ENCODE measurements at regions of chr12 and their contacts with region 1.

Region 1: DNA sequence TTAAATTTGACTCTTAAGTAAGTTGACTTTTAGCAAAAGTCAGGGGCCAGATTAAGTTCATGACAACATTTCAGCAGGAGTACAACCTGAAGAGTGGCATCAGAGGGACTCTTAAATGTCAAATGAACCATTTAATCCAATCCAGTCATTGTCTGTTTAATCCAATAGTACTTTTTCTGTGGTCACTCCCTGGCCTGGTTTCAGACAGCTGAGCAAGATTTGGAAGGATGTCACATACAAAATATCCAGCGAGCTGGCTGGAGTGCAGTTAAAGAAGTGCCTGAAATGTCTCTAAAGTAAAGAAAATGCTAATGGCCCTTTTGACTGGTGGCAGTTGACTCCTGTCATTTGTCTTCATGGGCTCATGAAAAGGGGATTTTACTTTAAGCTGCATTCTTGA is 1082.1 kb downstream of the AACS start:
- DNase-seq: no peak
- H3K4me3 ChIP-seq: no peak overlapping the region
- H3K27ac ChIP-seq: no peak overlapping the region
- H3K4me1 ChIP-seq: no peaks in the 10 kb centered on the region
- H3K27me3 ChIP-seq: no peaks in the 10 kb centered on the region
- CTCF ChIP-seq: no peak
- EP300 ChIP-seq: no peak
- POLR2A ChIP-seq: no peak

Region 2: GRCh38 chr12:125696044-125696443 is 451.3 kb before region 1 on chr12:
- in situ Hi-C with region 1: no loop called
- intact Hi-C with region 1: no loop called
- DNase-seq: no peak
- H3K4me3 ChIP-seq: no peak overlapping the region
- H3K27ac ChIP-seq: no peak overlapping the region
- H3K4me1 ChIP-seq: no peaks in the 10 kb centered on the region
- H3K27me3 ChIP-seq: no peaks in the 10 kb centered on the region
- CTCF ChIP-seq: no peak
- EP300 ChIP-seq: no peak
- POLR2A ChIP-seq: no peak

Region 3: GRCh38 chr12:126114441-126114840 is 32.9 kb before region 1 on chr12:
- in situ Hi-C with region 1: no loop called
- intact Hi-C with region 1: no loop called
- DNase-seq: no peak
- H3K4me3 ChIP-seq: no peak overlapping the region
- H3K27ac ChIP-seq: no peak overlapping the region
- H3K4me1 ChIP-seq: no peaks in the 10 kb centered on the region
- H3K27me3 ChIP-seq: no peaks in the 10 kb centered on the region
- CTCF ChIP-seq: no peak
- EP300 ChIP-seq: no peak
- POLR2A ChIP-seq: no peak

Region 4: DNA sequence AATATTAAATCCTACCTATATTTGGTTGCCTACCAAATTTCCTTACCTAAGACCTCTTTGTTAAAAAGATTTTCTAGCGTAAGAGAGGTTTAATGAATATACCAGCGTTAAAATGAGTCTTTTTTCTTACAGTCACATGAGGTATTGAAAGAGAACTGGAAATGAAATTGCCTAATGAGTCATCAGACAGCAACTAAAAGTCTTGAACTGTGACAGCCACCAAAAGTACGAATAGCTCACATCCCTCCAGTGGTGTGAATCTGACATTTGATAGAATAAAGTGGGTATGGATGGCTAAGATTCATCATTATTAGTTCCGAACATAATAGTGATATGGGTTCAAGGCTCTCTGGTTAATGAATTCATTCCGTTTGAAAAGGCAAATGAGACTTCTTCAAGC is 215.2 kb after region 1 on chr12:
- in situ Hi-C with region 1: no loop called
- intact Hi-C with region 1: no loop called
- DNase-seq: no peak
- H3K4me3 ChIP-seq: no peak overlapping the region
- H3K27ac ChIP-seq: no peak overlapping the region
- H3K4me1 ChIP-seq: no peaks in the 10 kb centered on the region
- H3K27me3 ChIP-seq: no peaks in the 10 kb centered on the region
- CTCF ChIP-seq: no peak
- EP300 ChIP-seq: no peak
- POLR2A ChIP-seq: no peak

Region 5: DNA sequence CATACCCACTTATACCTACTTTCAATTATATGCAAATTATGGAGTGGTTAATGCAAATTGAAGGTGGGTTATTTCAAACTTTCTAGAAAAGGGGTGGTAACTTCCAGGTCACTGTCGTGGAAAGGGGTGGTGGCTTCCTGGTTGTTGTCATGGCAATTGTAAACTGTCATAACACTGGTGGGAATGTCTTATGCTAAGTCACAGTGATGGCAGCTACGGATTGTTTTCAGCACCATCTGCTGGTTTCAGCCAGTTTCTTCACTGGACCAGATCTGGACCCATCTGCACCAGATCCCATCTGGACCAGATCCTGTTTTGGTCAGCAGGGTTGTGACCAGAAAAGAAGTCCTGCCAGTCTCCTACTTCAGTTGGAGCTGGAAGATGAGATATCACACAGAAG is 387.2 kb after region 1 on chr12:
- in situ Hi-C with region 1: no loop called
- intact Hi-C with region 1: no loop called
- DNase-seq: no peak
- H3K4me3 ChIP-seq: no peak overlapping the region
- H3K27ac ChIP-seq: no peak overlapping the region
- H3K4me1 ChIP-seq: no peaks in the 10 kb centered on the region
- H3K27me3 ChIP-seq: no peaks in the 10 kb centered on the region
- CTCF ChIP-seq: no peak
- EP300 ChIP-seq: no peak
- POLR2A ChIP-seq: no peak

Region 6: GRCh38 chr12:126791122-126791521 is 643.8 kb after region 1 on chr12:
- in situ Hi-C with region 1: no loop called
- intact Hi-C with region 1: loop called (anchors 5 kb)
- DNase-seq: no peak
- H3K4me3 ChIP-seq: no peak overlapping the region
- H3K27ac ChIP-seq: no peak overlapping the region
- H3K4me1 ChIP-seq: no peaks in the 10 kb centered on the region
- H3K27me3 ChIP-seq: no peaks in the 10 kb centered on the region
- CTCF ChIP-seq: no peak
- EP300 ChIP-seq: no peak
- POLR2A ChIP-seq: no peak